ENCODE measurements at regions of chr11 and their contacts with region 1.

Region 1: DNA sequence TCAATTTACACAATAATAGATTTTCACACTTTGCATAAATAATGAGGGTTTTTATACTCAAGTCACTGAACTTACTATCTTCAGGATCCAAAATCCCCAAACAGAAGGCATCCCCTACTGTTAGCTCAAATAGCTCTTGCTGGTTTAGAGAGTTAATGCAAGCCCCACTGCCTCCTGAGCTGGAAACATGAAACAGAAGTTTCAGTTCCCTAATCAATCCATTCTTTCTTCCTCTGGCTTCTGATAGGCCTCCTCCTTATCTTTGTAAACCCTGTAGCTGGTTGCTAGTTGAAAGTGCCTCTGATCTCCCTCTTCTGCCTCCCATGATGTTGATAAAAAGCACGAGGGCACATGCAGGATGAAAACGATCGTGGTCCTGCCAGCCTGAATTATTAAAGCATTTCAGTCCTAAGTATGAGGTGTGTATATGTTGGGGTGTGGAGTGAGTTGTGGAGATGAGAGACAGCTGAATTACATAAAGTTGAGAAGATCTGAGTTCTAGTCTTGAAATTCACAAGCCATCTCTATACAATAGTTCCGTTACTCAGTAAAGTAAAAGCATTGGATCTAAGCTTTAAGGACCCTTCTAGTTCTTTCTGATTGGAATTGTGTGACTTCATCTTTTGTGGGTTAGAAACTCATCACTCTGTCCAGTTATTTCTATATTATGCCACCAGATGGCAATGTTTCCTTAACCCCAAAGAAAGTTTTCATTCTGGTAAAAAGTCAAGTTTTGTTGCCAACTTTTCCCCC is 35.0 kb upstream of the EHF start:
- DNase-seq: no peak
- ATAC-seq: peak; percentile 61

Region 2: GRCh38 chr11:34449013-34449412 is 136.9 kb before region 1 on chr11:
- intact Hi-C with region 1: no loop called
- DNase-seq: no peak
- ATAC-seq: no peak

Region 3: GRCh38 chr11:34512840-34513681 is 72.8 kb before region 1 on chr11:
- intact Hi-C with region 1: no loop called
- DNase-seq: peak; percentile 39 to 70
- ATAC-seq: peak; percentile 94

Region 4: GRCh38 chr11:34890812-34891211 is 304.9 kb after region 1 on chr11:
- intact Hi-C with region 1: loop called in 1 of 2 experiments (anchors 5 kb)
- DNase-seq: no peak
- ATAC-seq: peak; percentile 73

Region 5: GRCh38 chr11:35404388-35404775 is 818.5 kb after region 1 on chr11:
- intact Hi-C with region 1: loop called in 1 of 2 experiments (anchors 10 kb)
- DNase-seq: peak in 1 of 2 donors; percentile 52
- ATAC-seq: peak; percentile 65

Measured in left colon (tissue), 2 donors.